ENCODE measurements at regions of chr3 and their contacts with region 1.

Region 1: GRCh38 chr3:66722675-66723074 is 221.9 kb upstream of the LRIG1 start:
- DNase-seq: no peak
- ATAC-seq: no peak
- H3K4me3 ChIP-seq: no peak overlapping the region
- H3K27ac ChIP-seq: no peak overlapping the region
- H3K4me1 ChIP-seq: no peaks in the 10 kb centered on the region
- H3K27me3 ChIP-seq: no peaks in the 10 kb centered on the region
- CTCF ChIP-seq: no peak
- EP300 ChIP-seq: no peak
- POLR2A ChIP-seq: no peak
- RAD21 ChIP-seq: no peak

Region 2: GRCh38 chr3:65914740-65915367 is 807.8 kb before region 1 on chr3:
- CTCF ChIA-PET with region 1: no interaction called
- POLR2A ChIA-PET with region 1: no interaction called
- RAD21 ChIA-PET with region 1: no interaction called
- SMC1A ChIA-PET with region 1: no interaction called
- in situ Hi-C with region 1: no loop called
- intact Hi-C with region 1: no loop called
- DNase-seq: no peak
- ATAC-seq: peak; percentile 61
- H3K4me3 ChIP-seq: no peak overlapping the region
- H3K27ac ChIP-seq: no peak overlapping the region
- H3K4me1 ChIP-seq: no peaks in the 10 kb centered on the region
- H3K27me3 ChIP-seq: no peaks in the 10 kb centered on the region
- CTCF ChIP-seq: peak; percentile 1 to 15 (median 14); a peak in 2 of 6 replicates
- EP300 ChIP-seq: no peak
- POLR2A ChIP-seq: no peak
- RAD21 ChIP-seq: peak; percentile 33; the same call in 1 of the 2 replicates

Region 3: DNA sequence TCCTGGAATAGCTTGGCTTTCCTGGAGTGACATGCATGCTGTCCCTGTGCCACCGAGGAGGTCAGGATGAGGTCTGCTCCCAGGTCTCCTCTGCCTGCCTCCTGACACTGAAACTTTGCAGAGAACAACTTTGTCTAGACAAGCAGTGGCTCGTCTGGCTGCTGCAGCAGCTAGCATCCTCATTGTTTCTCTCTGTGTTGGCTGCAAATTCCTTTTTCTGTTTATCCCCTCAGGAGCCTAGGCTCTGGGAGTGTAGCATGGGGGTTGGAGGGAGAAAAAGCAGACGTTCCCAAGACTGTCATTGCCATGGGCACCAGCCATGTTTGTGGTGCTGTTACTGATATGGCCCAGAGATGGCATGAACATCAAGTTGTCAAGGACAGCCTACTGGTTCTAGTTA is 13.1 kb before region 1 on chr3:
- CTCF ChIA-PET with region 1: interaction called, 3 read pairs
- POLR2A ChIA-PET with region 1: no interaction called
- RAD21 ChIA-PET with region 1: no interaction called
- SMC1A ChIA-PET with region 1: interaction called, 10 read pairs
- in situ Hi-C with region 1: no loop called
- intact Hi-C with region 1: no loop called
- DNase-seq: no peak
- ATAC-seq: no peak
- H3K4me3 ChIP-seq: no peak overlapping the region
- H3K27ac ChIP-seq: no peak overlapping the region
- H3K4me1 ChIP-seq: no peaks in the 10 kb centered on the region
- H3K27me3 ChIP-seq: no peaks in the 10 kb centered on the region; a peak in 1 of 4 replicates
- CTCF ChIP-seq: no peak
- EP300 ChIP-seq: no peak
- POLR2A ChIP-seq: no peak
- RAD21 ChIP-seq: no peak

Region 4: DNA sequence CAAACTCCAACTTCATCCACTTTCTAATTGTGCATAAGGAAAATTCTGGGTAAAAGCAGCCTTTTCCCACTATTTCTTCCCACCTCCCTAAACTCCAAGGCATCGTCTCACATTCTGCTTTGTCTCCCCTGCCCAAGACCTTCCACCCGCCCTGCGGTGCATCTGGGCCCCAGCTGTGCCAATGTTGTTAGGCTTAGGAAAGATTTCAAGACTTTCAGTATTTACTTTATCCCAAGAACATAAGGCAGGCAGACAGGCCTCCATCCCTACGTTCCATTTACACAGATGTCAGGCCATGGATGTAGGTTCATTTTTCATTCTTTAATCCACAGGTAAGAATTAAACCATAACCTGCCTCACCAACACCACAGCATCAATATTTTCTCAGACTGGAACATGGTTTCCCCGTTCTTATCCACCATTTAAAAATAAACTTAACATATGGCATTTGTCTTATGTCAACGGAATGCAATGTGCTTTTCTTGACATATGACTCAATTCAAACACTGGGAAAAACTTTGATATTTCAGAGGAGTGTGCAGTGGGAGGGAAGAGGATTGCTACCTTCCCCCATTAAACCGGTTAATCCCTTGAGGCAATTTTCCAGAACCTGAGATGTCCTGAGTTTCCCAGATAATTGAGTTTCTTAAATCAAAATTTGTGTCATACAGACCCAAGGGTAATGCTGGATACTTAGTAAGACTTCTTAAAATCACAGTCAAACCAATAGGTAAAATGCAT is 16.1 kb after region 1 on chr3:
- CTCF ChIA-PET with region 1: no interaction called
- POLR2A ChIA-PET with region 1: no interaction called
- RAD21 ChIA-PET with region 1: no interaction called
- SMC1A ChIA-PET with region 1: no interaction called
- in situ Hi-C with region 1: no loop called
- intact Hi-C with region 1: no loop called
- DNase-seq: no peak
- ATAC-seq: no peak
- H3K4me3 ChIP-seq: no peak overlapping the region
- H3K27ac ChIP-seq: no peak overlapping the region
- H3K4me1 ChIP-seq: no peaks in the 10 kb centered on the region
- H3K27me3 ChIP-seq: no peaks in the 10 kb centered on the region; a peak in 1 of 4 replicates
- CTCF ChIP-seq: no peak
- EP300 ChIP-seq: no peak
- POLR2A ChIP-seq: no peak
- RAD21 ChIP-seq: no peak

Region 5: DNA sequence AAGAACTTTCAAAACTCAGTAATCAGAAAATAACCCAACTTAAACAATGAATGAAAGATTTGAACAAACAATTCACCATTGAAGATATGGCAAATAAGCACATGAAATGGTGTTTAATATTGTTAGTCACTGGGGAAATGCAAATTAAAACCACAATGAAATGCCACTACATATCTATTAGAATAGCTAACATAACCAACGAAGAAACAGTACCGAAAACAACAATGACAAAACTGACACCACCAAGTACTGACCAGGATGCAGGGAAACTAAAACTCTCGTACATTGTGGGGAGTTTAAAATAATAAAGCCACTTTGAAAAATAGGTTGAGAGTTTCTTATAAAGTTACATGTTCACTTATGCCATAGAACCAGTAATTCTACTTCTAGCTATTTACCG is 344.6 kb after region 1 on chr3:
- CTCF ChIA-PET with region 1: no interaction called
- POLR2A ChIA-PET with region 1: no interaction called
- RAD21 ChIA-PET with region 1: no interaction called
- SMC1A ChIA-PET with region 1: no interaction called
- in situ Hi-C with region 1: no loop called
- intact Hi-C with region 1: no loop called
- DNase-seq: no peak
- ATAC-seq: peak; percentile 90
- H3K4me3 ChIP-seq: no peak overlapping the region
- H3K27ac ChIP-seq: no peak overlapping the region
- H3K4me1 ChIP-seq: no peaks in the 10 kb centered on the region
- H3K27me3 ChIP-seq: no peaks in the 10 kb centered on the region
- CTCF ChIP-seq: no peak
- EP300 ChIP-seq: no peak
- POLR2A ChIP-seq: no peak
- RAD21 ChIP-seq: no peak